Activated CD4-positive, alpha-beta T cell treated with anti-CD3 and anti-CD28 coated beads for 36 hours (primary cell): ENCODE measurements at regions of chr1 and their contacts with region 1.

Region 1: DNA sequence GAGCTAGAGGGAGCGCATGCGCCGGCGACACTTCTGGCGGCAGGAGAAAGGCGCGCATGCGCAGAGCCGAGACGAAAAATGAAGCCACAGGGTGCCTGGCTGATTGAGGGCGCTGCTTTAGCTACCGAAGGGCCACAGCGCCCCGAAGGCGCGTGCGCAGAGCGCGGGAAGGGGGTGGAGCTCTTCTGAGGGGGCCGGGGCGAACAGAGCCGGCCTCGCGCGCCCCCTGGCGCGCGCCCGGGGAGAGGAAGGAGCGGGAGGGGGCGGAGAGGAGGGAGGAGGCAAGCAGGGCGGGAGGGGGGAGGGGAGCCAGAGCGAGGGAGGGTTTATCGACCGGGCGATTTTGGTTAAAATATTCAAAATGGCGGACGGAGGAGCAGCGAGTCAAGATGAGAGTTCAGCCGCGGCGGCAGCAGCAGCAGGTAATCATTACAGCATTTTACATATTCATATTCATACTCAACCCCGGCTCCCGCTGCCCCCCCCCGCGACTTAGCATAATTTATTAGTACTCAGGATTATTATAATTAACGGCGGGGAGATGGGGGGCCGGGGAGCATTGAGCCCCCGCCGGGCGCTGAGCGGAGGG is at the start of gene POU2F1:
- DNase-seq: peak; percentile 99
- ATAC-seq: peak; percentile 82
- H3K4me3 Mint-ChIP-seq: peak within 1 kb of the TSS; percentile 96
- H3K27ac Mint-ChIP-seq: peak within 1 kb of the TSS; percentile 99
- H3K4me1 Mint-ChIP-seq: peaks cover 43% of the 10 kb centered on the region
- H3K27me3 Mint-ChIP-seq: no peaks in the 10 kb centered on the region
- total RNA-seq, gene POU2F1: 20.3 to 21.6 TPM

Region 2: GRCh38 chr1:166875734-166876539 is 344.7 kb before region 1 on chr1 and contains the start of gene TADA1:
- CTCF ChIA-PET with region 1: interaction called, 4 read pairs
- POLR2A ChIA-PET with region 1: interaction called, 7 read pairs
- intact Hi-C with region 1: loop called (anchors 1 kb)
- DNase-seq: peak; percentile 100
- ATAC-seq: peak; percentile 91
- H3K4me3 Mint-ChIP-seq: peak within 1 kb of the TSS; percentile 92
- H3K27ac Mint-ChIP-seq: peak within 1 kb of the TSS; percentile 97
- H3K4me1 Mint-ChIP-seq: peaks cover 45% of the 10 kb centered on the region
- H3K27me3 Mint-ChIP-seq: no peaks in the 10 kb centered on the region
- total RNA-seq, gene TADA1: 16.0 to 19.5 TPM

Region 3: GRCh38 chr1:167066333-167067122 is 154.1 kb before region 1 on chr1:
- CTCF ChIA-PET with region 1: interaction called, 5 read pairs
- POLR2A ChIA-PET with region 1: interaction called, 4 read pairs
- intact Hi-C with region 1: loop called (anchors 1 to 2 kb)
- DNase-seq: peak; percentile 87
- ATAC-seq: peak; percentile 95
- H3K4me3 Mint-ChIP-seq: no peak overlapping the region
- H3K27ac Mint-ChIP-seq: no peak overlapping the region
- H3K4me1 Mint-ChIP-seq: no peaks in the 10 kb centered on the region
- H3K27me3 Mint-ChIP-seq: no peaks in the 10 kb centered on the region

Region 4: DNA sequence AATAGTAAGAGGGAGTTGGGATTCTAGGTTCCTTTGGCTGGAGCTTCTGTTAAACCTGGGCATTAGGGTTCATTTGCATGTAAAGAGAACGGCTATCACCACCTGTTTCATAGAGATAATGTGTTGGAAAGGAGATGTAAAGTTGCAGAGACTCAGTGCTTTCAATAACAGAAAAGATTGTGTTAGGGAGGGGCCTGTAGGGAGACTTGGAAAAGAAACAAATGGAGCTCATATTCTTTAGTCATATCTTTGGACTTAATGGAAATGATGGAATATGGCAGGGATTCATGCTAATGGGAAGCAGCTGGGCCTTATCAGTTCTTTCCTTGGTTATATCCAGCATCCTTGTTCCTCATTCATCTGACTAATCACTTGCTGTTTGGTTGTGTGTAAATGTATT is 152.8 kb after region 1 on chr1:
- CTCF ChIA-PET with region 1: no interaction called
- POLR2A ChIA-PET with region 1: no interaction called
- intact Hi-C with region 1: no loop called
- DNase-seq: no peak
- ATAC-seq: no peak
- H3K4me3 Mint-ChIP-seq: no peak overlapping the region
- H3K27ac Mint-ChIP-seq: no peak overlapping the region
- H3K4me1 Mint-ChIP-seq: no peaks in the 10 kb centered on the region
- H3K27me3 Mint-ChIP-seq: no peaks in the 10 kb centered on the region

Region 5: DNA sequence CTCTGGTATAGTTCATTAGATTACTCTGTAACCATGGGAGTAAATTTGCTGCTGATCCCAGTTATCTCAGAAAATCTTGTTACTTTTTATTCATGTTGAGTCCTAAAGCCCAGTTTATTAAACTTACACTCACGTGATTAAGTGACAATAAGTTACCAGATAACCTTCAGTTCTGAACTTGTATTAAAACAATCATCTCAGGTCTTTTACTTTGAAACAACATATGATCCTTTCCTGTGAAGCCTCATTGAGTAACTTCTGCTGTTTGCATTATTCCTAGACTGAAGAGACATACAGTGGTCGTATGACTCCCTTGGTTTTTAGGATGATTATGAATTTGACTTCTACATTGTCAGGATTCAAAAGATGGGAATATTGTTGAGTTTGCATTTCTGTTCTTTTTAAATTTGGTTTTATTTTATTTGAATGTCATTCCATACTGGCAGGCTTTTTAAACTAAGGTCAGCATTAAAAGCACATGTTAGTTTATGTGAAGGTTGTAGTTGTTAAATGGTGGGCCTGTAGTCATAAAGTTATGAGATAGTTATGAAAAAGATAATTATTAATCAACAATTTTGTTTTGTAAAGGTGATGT is 179.8 kb after region 1 on chr1:
- CTCF ChIA-PET with region 1: no interaction called
- POLR2A ChIA-PET with region 1: no interaction called
- intact Hi-C with region 1: no loop called
- DNase-seq: no peak
- ATAC-seq: no peak
- H3K4me3 Mint-ChIP-seq: no peak overlapping the region
- H3K27ac Mint-ChIP-seq: no peak overlapping the region
- H3K4me1 Mint-ChIP-seq: no peaks in the 10 kb centered on the region
- H3K27me3 Mint-ChIP-seq: no peaks in the 10 kb centered on the region

Region 6: DNA sequence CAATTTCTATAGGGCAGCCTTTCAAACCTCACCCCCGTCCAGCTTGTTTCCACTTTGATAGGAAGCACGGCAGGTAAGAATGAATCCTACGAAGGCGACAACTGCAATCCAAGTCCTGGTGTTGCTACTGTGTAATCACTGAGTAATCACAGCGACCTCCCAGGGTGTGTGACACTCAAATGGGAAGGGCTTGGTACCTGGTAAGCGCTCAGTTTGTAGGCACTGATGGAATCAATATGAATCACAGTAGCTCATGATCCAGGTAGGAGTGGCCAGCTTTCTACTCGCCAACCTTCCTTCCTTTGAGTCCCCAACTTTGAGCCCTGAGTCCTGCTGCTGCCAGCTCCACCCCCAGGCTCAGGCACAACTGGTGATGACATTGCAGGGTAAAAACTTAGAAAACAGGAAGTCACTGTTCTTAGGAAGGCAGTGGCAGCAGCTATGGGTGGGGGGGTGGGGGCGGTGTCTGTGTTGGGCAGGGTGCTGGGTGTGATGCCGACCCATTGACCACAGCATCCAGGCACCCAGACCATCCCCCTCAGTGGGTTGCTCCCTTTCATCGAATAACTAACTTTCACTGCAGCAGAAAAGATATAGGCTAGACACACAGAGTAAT is 227.0 kb after region 1 on chr1:
- CTCF ChIA-PET with region 1: no interaction called
- POLR2A ChIA-PET with region 1: interaction called, 7 read pairs
- intact Hi-C with region 1: loop called (anchors 2 to 5 kb)
- DNase-seq: peak; percentile 87
- ATAC-seq: peak; percentile 86
- H3K4me3 Mint-ChIP-seq: peak overlapping the region; percentile 56
- H3K27ac Mint-ChIP-seq: peak overlapping the region; percentile 94
- H3K4me1 Mint-ChIP-seq: peaks cover 86% of the 10 kb centered on the region
- H3K27me3 Mint-ChIP-seq: no peaks in the 10 kb centered on the region

Region 7: GRCh38 chr1:167491586-167492461 is 271.2 kb after region 1 on chr1:
- CTCF ChIA-PET with region 1: no interaction called
- POLR2A ChIA-PET with region 1: no interaction called
- intact Hi-C with region 1: no loop called
- DNase-seq: peak; percentile 66
- ATAC-seq: peak; percentile 41
- H3K4me3 Mint-ChIP-seq: peak overlapping the region; percentile 55
- H3K27ac Mint-ChIP-seq: peak overlapping the region; percentile 92
- H3K4me1 Mint-ChIP-seq: peaks cover 96% of the 10 kb centered on the region
- H3K27me3 Mint-ChIP-seq: no peaks in the 10 kb centered on the region

Region 8: GRCh38 chr1:167553136-167554027 is 332.8 kb after region 1 on chr1 and contains the start of gene CREG1:
- CTCF ChIA-PET with region 1: interaction called, 4 read pairs
- POLR2A ChIA-PET with region 1: interaction called, 5 read pairs
- intact Hi-C with region 1: loop called in 1 of 2 experiments (anchors 1 kb)
- DNase-seq: peak; percentile 94
- ATAC-seq: peak; percentile 100
- H3K4me3 Mint-ChIP-seq: peak within 1 kb of the TSS; percentile 77
- H3K27ac Mint-ChIP-seq: peak within 1 kb of the TSS; percentile 38
- H3K4me1 Mint-ChIP-seq: peaks cover 33% of the 10 kb centered on the region
- H3K27me3 Mint-ChIP-seq: no peaks in the 10 kb centered on the region
- total RNA-seq, gene CREG1: 8.8 to 9.4 TPM

Region 9: DNA sequence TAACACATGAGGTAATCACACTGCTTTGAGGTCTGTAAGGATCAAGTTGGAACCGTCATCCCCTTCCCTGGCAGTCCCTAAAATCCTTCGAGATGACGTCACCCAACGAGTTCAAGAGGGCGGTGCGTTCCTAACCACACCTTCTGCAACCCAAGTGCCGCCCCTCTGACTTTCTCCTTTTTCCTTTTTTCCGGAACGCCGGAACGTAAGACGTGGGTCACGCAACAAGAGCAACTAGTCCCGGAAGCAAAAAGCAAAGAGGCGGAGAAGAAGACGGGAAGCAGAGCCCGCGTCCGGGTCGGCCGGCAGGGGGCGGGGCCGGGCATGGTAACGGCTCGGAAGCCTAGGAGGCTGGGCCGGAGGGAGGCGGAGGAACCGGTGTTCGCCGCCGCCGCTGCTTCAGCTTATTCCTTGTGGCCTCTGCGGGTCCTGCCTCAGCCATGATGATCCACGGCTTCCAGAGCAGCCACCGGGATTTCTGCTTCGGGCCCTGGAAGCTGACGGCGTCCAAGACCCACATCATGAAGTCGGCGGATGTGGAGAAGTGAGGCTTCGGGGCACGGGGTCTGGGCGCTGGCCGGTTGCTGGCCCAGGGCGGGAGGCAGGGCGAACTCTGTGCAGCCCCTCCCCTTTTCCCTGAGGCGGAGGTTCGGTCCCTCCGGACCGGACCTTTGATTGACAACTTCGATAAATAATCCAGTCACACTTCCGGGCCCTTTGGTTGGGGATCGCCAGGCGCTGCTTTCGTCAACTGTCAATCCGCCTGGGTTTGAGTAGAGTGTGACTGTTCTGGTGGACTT is 958.2 kb after region 1 on chr1 and contains the start of gene TIPRL:
- CTCF ChIA-PET with region 1: no interaction called
- POLR2A ChIA-PET with region 1: no interaction called
- intact Hi-C with region 1: loop called in 1 of 2 experiments (anchors 1 kb)
- DNase-seq: peak; percentile 97
- ATAC-seq: peak; percentile 90
- H3K4me3 Mint-ChIP-seq: no peak within 1 kb of the TSS
- H3K27ac Mint-ChIP-seq: no peak within 1 kb of the TSS
- H3K4me1 Mint-ChIP-seq: peaks cover 9% of the 10 kb centered on the region
- H3K27me3 Mint-ChIP-seq: no peaks in the 10 kb centered on the region
- total RNA-seq, gene TIPRL: 52.5 to 57.5 TPM